ENCODE measurements at regions of chr3 and their contacts with region 1.

Region 1: GRCh38 chr3:34292605-34293300 is 494.3 kb downstream of the PDCD6IP start:
- DNase-seq: peak in 1 of 2 donors; percentile 4
- H3K4me3 ChIP-seq: no peak overlapping the region
- H3K27ac ChIP-seq: no peak overlapping the region
- H3K4me1 ChIP-seq: no peaks in the 10 kb centered on the region
- H3K27me3 ChIP-seq: no peaks in the 10 kb centered on the region
- CTCF ChIP-seq: no peak
- EP300 ChIP-seq: no peak
- POLR2A ChIP-seq: no peak

Region 2: GRCh38 chr3:34377571-34378360 is 85.0 kb after region 1 on chr3:
- intact Hi-C with region 1: loop called (anchors 10 kb)
- DNase-seq: peak in 1 of 2 donors; percentile 73
- H3K4me3 ChIP-seq: no peak overlapping the region
- H3K27ac ChIP-seq: no peak overlapping the region
- H3K4me1 ChIP-seq: peaks cover 4 to 16% (median 11%) of the 10 kb centered on the region in 4 donors
- H3K27me3 ChIP-seq: no peaks in the 10 kb centered on the region
- CTCF ChIP-seq: no peak
- EP300 ChIP-seq: no peak
- POLR2A ChIP-seq: no peak

Region 3: GRCh38 chr3:34394978-34395748 is 102.4 kb after region 1 on chr3:
- intact Hi-C with region 1: no loop called
- DNase-seq: no peak
- H3K4me3 ChIP-seq: no peak overlapping the region
- H3K27ac ChIP-seq: no peak overlapping the region
- H3K4me1 ChIP-seq: no peaks in the 10 kb centered on the region
- H3K27me3 ChIP-seq: no peaks in the 10 kb centered on the region
- CTCF ChIP-seq: no peak
- EP300 ChIP-seq: no peak
- POLR2A ChIP-seq: no peak

Region 4: GRCh38 chr3:34408088-34408487 is 115.3 kb after region 1 on chr3:
- intact Hi-C with region 1: no loop called
- DNase-seq: no peak
- H3K4me3 ChIP-seq: no peak overlapping the region
- H3K27ac ChIP-seq: no peak overlapping the region
- H3K4me1 ChIP-seq: no peaks in the 10 kb centered on the region
- H3K27me3 ChIP-seq: no peaks in the 10 kb centered on the region
- CTCF ChIP-seq: no peak
- EP300 ChIP-seq: no peak
- POLR2A ChIP-seq: no peak

Region 5: DNA sequence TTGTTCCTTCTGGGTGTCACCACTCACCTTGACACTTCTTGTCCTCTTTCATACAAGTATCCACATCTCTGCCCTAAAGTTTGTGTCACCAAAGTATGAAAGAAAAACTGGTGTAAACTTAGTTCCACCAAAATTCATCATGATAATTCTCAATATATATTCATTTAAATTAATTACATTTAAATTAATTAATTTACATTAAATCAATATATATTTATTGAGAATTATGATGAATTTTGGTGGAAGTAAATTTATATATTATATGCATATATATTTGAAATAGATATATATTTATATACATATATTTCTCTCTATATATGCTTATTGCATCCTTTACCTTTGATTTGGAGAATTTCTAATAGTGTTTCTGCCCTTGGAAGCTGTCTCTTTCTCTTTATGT is 333.9 kb after region 1 on chr3:
- intact Hi-C with region 1: no loop called
- DNase-seq: no peak
- H3K4me3 ChIP-seq: no peak overlapping the region
- H3K27ac ChIP-seq: no peak overlapping the region
- H3K4me1 ChIP-seq: no peaks in the 10 kb centered on the region
- H3K27me3 ChIP-seq: no peaks in the 10 kb centered on the region
- CTCF ChIP-seq: no peak
- EP300 ChIP-seq: no peak
- POLR2A ChIP-seq: no peak

Measured in stomach (tissue), 19 donors.